ENCODE measurements at regions of chr13 and their contacts with region 1.

Region 1: DNA sequence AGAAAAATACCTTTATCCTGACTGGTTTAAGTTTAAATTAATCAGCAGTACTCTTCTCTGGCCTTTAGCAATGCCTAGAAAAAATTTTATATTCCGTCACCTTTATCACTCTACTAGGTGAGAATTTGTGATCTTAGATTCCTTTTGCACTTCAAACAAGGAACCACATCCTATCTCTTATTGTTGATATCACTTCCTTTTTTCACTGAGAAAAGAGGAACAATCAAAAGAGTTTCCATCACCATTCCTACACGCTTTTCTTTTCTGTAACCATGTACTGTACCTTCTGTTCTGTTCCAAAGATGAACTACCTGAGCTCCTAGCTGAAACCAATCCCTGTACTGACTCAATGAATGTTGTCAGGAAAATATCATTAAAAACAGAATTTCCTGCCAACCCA is 1379.0 kb upstream of the MIR17HG start:
- DNase-seq: peak; percentile 14 to 37 (median 34)
- H3K4me3 ChIP-seq: no peak overlapping the region
- H3K4me3 Mint-ChIP-seq: peak overlapping the region in 1 of 2 donors; percentile 62
- H3K27ac ChIP-seq: no peak overlapping the region
- H3K27ac Mint-ChIP-seq: peak overlapping the region in 1 of 7 donors; percentile 87
- H3K4me1 ChIP-seq: peaks cover 12 to 14% of the 10 kb centered on the region in 2 donors
- H3K4me1 Mint-ChIP-seq: peaks cover 24% of the 10 kb centered on the region
- H3K27me3 ChIP-seq: no peaks in the 10 kb centered on the region
- H3K27me3 Mint-ChIP-seq: peaks cover 0 to 3% (median 0%) of the 10 kb centered on the region in 3 donors
- CTCF ChIP-seq: no peak

Region 2: DNA sequence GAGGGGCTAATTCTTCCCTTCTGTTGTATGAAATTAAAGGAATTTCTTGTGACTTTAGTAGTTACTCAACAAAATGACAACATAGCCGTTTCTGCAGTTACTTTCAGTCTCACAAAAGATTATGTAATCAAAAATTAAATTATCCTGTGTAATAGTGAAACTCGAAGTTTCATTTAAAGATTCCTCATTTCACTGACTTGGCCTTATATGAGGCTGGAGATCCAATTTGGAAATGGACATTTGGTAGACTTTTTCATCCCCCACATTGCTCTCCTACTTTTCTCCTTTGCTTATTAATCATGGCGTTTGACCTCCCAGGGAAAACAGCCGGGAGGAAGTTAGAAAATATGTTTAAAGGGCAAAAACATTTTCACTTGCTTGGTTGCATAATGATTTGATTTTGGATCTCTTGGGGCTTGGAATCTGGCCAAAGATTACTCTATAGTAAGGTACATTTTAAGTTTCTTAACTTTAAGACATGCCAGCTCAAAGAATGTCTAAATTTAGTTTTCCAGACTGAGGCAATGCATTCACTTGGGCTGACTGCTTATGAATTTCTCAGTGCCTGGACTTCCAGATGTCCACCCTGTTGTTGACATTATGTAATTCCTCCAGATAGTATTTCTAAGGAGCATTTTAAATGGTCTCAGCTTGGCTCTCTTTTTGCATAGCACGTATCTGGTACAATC is 14.1 kb after region 1 on chr13:
- intact Hi-C with region 1: loop called in 1 of 2 experiments (anchors 2 kb)
- DNase-seq: peak; percentile 36 to 69 (median 60)
- H3K4me3 ChIP-seq: peak overlapping the region; percentile 28 to 73 (median 55)
- H3K4me3 Mint-ChIP-seq: peak overlapping the region; percentile 48 to 77
- H3K27ac ChIP-seq: peak overlapping the region; percentile 21 to 85
- H3K27ac Mint-ChIP-seq: peak overlapping the region; percentile 84 to 95 (median 90)
- H3K4me1 ChIP-seq: peaks cover 15 to 26% of the 10 kb centered on the region in 2 donors
- H3K4me1 Mint-ChIP-seq: peaks cover 17% of the 10 kb centered on the region
- H3K27me3 ChIP-seq: no peaks in the 10 kb centered on the region
- H3K27me3 Mint-ChIP-seq: peaks cover 0 to 1% (median 0%) of the 10 kb centered on the region in 3 donors
- CTCF ChIP-seq: no peak

Region 3: DNA sequence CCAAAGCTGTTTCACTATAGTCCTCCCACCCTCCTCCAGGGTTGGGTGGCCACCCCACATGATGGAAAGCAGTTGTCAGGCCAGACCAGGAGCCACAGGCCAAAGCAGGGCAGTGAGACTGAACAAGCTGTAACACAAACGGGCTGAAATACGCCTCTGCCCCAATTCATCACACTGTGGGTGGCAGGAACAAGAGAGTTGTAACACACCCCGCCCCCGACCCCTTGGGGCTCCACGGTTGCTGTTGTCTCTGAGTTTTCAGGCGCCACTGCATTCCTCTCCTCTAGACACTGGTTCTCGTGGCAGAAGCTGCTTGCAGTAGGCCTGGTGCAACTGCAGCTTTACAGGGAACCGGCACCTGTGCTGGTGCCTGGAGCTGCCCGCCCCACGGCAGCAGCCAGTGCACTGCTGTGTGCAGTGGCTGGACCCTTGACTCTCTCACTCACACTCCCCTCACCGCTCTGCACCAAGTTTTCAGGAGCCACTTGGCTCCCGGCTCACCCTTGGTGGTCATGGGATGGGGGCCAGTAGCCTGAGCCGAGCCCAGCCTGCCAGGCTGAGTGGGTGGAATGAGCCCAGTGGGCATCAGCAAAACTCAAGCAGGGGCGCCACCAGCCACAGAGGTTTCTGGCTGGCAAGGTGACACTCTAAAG is 64.5 kb after region 1 on chr13:
- intact Hi-C with region 1: no loop called
- DNase-seq: no peak
- H3K4me3 ChIP-seq: no peak overlapping the region
- H3K4me3 Mint-ChIP-seq: no peak overlapping the region
- H3K27ac ChIP-seq: no peak overlapping the region
- H3K27ac Mint-ChIP-seq: no peak overlapping the region
- H3K4me1 ChIP-seq: no peaks in the 10 kb centered on the region
- H3K4me1 Mint-ChIP-seq: no peaks in the 10 kb centered on the region
- H3K27me3 ChIP-seq: no peaks in the 10 kb centered on the region
- H3K27me3 Mint-ChIP-seq: no peaks in the 10 kb centered on the region
- CTCF ChIP-seq: no peak

Region 4: GRCh38 chr13:91056746-91057145 is 1088.3 kb after region 1 on chr13:
- intact Hi-C with region 1: no loop called
- DNase-seq: no peak
- H3K4me3 ChIP-seq: no peak overlapping the region
- H3K4me3 Mint-ChIP-seq: no peak overlapping the region
- H3K27ac ChIP-seq: no peak overlapping the region
- H3K27ac Mint-ChIP-seq: peak overlapping the region in 1 of 7 donors; percentile 30
- H3K4me1 ChIP-seq: no peaks in the 10 kb centered on the region
- H3K4me1 Mint-ChIP-seq: no peaks in the 10 kb centered on the region
- H3K27me3 ChIP-seq: no peaks in the 10 kb centered on the region
- H3K27me3 Mint-ChIP-seq: no peaks in the 10 kb centered on the region
- CTCF ChIP-seq: no peak

Measured in CD14-positive monocyte (primary cell).